ENCODE measurements at regions of chr2 and their contacts with region 1.

Region 1: GRCh38 chr2:233100192-233100998 is 40.3 kb downstream of the INPP5D start:
- DNase-seq: peak; percentile 93
- ATAC-seq: peak; percentile 86
- H3K4me3 ChIP-seq: peak overlapping the region in 4 of 5 experiments; percentile 18 to 55 (median 40)
- H3K4me3 Mint-ChIP-seq: peak overlapping the region; percentile 83
- H3K27ac ChIP-seq: peak overlapping the region; percentile 96 to 98
- H3K27ac Mint-ChIP-seq: peak overlapping the region; percentile 97
- H3K4me1 ChIP-seq: peaks cover 79 to 83% of the 10 kb centered on the region in 2 donors
- H3K4me1 Mint-ChIP-seq: peaks cover 80% of the 10 kb centered on the region
- H3K27me3 ChIP-seq: no peaks in the 10 kb centered on the region
- H3K27me3 Mint-ChIP-seq: no peaks in the 10 kb centered on the region
- CTCF ChIP-seq: no peak

Region 2: DNA sequence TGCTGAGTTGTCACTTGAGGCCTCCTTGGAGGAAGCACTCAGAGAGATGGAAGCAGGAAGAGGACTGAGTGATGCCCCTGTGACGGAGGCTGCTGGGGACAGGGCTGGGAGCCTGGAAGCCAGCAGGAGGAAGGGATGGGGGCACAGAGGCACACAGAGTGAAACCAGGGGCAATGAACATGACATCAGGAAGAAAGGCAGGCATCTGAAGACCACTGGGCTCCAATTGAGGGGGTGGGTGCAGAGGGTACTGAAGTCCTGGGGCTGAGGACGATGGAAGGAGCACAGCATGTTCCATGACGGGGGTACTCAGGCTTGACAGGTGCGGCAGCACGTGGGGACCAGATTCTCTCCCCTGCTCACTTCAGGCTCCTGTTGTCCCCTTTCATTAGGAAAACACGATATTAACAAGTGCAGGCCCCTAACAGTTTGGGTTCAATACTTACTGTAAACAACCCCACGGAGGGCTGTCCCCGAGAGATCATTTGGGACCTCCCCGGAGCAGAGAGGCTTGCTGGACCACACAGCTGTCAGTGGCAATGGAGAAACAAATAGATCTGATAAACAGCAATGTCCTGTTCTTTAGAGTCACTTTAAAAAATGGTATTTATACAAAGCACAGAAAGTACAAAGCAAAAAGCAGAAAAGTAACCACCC is 31.5 kb before region 1 on chr2:
- CTCF ChIA-PET with region 1: interaction called, 9 read pairs
- POLR2A ChIA-PET with region 1: interaction called, 16 read pairs
- intact Hi-C with region 1: no loop called
- DNase-seq: no peak
- ATAC-seq: peak; percentile 44
- H3K4me3 ChIP-seq: peak overlapping the region in 2 of 5 experiments; percentile 25 to 47
- H3K4me3 Mint-ChIP-seq: peak overlapping the region; percentile 82
- H3K27ac ChIP-seq: peak overlapping the region; percentile 42 to 75
- H3K27ac Mint-ChIP-seq: peak overlapping the region; percentile 79
- H3K4me1 ChIP-seq: peaks cover 77 to 86% of the 10 kb centered on the region in 2 donors
- H3K4me1 Mint-ChIP-seq: peaks cover 70% of the 10 kb centered on the region
- H3K27me3 ChIP-seq: no peaks in the 10 kb centered on the region
- H3K27me3 Mint-ChIP-seq: no peaks in the 10 kb centered on the region
- CTCF ChIP-seq: no peak

Region 3: DNA sequence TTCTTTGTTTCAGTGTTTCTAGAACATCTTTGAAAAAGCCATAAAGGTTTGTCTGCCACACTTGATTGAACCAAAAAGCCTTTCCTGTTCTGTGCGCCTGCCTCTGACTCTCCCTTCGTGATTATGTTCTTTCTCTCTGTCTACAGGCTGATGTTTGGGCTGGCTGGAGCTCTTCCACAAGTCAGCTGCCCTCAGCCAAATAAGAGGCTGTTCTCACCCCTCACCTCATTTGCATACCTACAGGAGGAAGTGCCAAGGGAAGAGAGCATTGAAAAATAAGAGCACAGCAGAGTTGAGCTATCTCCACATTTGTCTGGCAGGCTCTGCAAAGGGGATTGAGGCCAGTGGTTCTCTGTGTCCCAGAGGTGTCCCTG is 24.4 kb before region 1 on chr2:
- CTCF ChIA-PET with region 1: interaction called, 15 read pairs
- POLR2A ChIA-PET with region 1: interaction called, 57 read pairs
- intact Hi-C with region 1: loop called (anchors 2 kb)
- DNase-seq: peak; percentile 86
- ATAC-seq: peak; percentile 83
- H3K4me3 ChIP-seq: peak overlapping the region; percentile 8 to 53 (median 35)
- H3K4me3 Mint-ChIP-seq: no peak overlapping the region
- H3K27ac ChIP-seq: peak overlapping the region; percentile 77 to 87
- H3K27ac Mint-ChIP-seq: no peak overlapping the region
- H3K4me1 ChIP-seq: peaks cover 91% of the 10 kb centered on the region in 2 donors
- H3K4me1 Mint-ChIP-seq: peaks cover 50% of the 10 kb centered on the region
- H3K27me3 ChIP-seq: no peaks in the 10 kb centered on the region
- H3K27me3 Mint-ChIP-seq: no peaks in the 10 kb centered on the region
- CTCF ChIP-seq: no peak

Region 4: DNA sequence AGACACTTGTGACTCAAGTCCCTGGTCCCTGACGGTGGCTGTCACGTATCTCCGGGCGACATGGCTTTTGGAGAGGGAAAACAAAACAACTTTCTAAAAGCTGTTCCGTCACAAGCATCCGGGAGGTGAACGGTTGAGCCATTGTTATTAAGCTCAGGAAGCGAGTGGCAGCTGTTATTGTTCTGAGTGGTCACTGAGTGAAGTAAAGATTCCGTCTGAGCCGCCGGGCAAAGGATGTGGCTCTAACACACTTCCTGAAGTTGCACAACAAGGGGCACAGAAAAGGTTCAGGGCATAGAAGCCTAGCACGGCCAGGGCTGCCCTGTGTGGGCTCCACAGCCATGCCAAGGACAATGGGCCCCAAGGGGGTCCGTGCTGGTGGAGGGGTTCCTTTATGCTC is 15.9 kb before region 1 on chr2:
- CTCF ChIA-PET with region 1: interaction called, 23 read pairs
- POLR2A ChIA-PET with region 1: interaction called, 57 read pairs
- intact Hi-C with region 1: loop called (anchors 1 kb)
- DNase-seq: peak; percentile 53
- ATAC-seq: peak; percentile 19
- H3K4me3 ChIP-seq: peak overlapping the region; percentile 2 to 48 (median 17)
- H3K4me3 Mint-ChIP-seq: peak overlapping the region; percentile 78
- H3K27ac ChIP-seq: peak overlapping the region; percentile 88
- H3K27ac Mint-ChIP-seq: peak overlapping the region; percentile 94
- H3K4me1 ChIP-seq: peaks cover 91 to 100% of the 10 kb centered on the region in 2 donors
- H3K4me1 Mint-ChIP-seq: peaks cover 95% of the 10 kb centered on the region
- H3K27me3 ChIP-seq: no peaks in the 10 kb centered on the region
- H3K27me3 Mint-ChIP-seq: no peaks in the 10 kb centered on the region
- CTCF ChIP-seq: no peak